ENCODE measurements at regions of chr22 and their contacts with region 1.

Region 1: DNA sequence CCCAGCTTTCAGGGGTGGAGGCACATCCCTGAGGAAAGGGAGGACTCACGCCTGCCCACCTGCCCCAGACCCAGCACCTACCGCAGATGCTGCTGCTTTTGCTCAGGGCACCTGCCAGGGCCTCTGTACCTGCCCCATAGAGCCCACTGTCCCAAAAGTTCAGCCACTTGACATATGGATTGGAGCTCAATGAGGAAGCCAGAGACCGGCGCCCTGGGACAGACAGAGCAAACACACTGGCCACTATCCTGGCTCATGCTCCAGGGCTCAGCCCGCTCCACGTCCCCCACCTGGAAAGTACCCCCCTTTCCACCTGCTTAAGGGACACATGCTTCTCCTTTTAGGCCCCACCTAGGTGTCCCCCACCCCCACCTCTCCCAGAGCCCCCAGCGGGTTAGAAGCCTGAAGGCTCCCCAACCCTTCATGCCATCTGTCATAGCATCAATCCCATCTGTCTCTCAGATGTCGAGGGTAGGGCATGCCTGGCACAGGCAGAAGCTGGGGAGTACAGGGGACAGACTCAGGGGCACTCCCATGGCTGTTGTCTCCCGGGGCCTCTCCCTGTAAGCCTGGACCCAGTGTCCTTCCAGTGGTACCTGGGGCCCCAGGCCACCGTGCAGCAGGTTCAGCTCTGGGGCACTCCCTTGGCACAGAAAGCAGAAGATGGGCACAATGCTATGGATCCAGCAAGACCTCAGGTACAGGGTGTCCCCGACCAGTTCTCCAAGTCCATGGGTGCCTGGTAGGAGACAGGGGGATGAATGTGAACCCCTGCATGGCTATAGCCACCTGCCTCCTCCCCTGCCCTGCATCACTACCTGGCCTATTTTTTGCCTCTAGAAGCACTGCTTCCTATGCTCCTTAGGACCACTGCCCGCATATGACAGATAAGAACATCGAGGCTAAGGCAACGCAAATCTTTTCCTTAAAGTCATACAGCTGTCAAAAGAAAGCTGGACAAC is 2.2 kb upstream of the P2RX6 start:
- DNase-seq: no peak
- ATAC-seq: no peak
- H3K4me3 ChIP-seq: no peak overlapping the region
- H3K4me3 Mint-ChIP-seq: peak overlapping the region; percentile 68 to 87 (median 69)
- H3K27ac ChIP-seq: peak overlapping the region; percentile 79
- H3K27ac Mint-ChIP-seq: peak overlapping the region; percentile 67 to 68
- H3K4me1 ChIP-seq: peaks cover 8 to 25% of the 10 kb centered on the region in 2 experiments
- H3K4me1 Mint-ChIP-seq: peaks cover 16 to 34% (median 26%) of the 10 kb centered on the region in 3 donors
- H3K27me3 ChIP-seq: peaks cover 0 to 4% of the 10 kb centered on the region in 2 experiments
- H3K27me3 Mint-ChIP-seq: no peaks in the 10 kb centered on the region

Region 2: DNA sequence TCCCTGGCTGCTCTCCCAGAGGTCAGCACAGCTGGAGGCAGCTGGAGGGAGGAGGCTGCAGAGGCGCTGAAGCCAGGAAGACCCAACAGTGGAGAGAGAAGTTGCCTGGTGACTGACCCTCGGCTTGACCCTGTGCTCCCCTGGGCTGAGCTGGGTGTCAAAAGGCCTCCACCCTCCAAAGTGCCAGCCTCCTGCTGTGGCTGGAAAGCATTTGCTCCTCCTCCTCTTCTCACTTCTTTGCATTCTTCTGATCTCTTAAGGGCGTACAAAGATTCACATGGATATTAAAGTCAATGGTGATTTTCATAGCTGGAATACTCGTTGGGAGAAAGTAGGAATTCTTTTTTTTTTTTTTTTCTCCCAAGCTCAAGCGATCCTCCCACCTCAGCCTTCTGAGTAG is 413.6 kb before region 1 on chr22:
- CTCF ChIA-PET with region 1: no interaction called
- POLR2A ChIA-PET with region 1: no interaction called
- DNase-seq: no peak
- ATAC-seq: no peak
- H3K4me3 ChIP-seq: no peak overlapping the region
- H3K4me3 Mint-ChIP-seq: no peak overlapping the region
- H3K27ac ChIP-seq: no peak overlapping the region
- H3K27ac Mint-ChIP-seq: no peak overlapping the region
- H3K4me1 ChIP-seq: peaks cover 0 to 4% of the 10 kb centered on the region in 2 experiments
- H3K4me1 Mint-ChIP-seq: peaks cover 0 to 4% (median 0%) of the 10 kb centered on the region in 3 donors
- H3K27me3 ChIP-seq: peaks cover 0 to 8% of the 10 kb centered on the region in 2 experiments
- H3K27me3 Mint-ChIP-seq: no peaks in the 10 kb centered on the region

Region 3: DNA sequence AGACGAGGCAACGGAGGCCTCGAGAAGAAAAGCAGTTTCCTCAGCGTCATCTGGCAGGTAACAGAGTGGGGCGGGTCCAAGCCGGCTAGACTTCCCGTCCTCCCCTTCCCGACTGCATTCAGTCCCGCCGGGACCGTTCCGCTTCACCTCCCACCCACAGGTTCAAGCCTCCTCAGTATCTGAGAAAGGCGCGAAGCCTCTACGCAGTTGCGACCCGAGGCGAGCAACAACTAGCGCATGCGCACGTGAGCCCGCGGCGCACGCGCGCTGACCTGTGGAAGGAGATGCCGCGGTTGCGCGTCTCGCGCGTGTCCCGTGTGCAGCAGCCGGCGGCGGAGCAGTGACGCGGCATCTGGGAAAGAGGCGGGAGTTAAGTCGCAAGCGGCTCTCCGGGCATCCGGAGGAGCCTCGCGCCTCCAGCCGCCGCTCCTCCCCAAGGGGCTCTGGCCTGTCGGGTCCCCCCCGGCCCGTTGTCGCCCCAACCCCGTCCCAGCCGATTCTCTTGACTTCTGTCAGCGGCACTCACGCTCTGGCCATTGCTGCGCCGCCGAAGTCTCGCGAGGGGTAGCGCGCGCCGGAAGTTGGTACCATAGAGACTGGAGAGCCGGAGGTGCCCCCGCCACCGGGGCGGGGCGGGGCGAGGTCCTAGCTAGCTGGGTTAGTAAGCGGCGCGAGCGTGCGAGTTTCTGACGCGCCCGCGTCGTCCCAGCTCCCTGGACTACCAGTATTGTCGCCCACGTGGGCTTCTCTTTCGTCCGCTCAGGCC is 11.0 kb before region 1 on chr22 and contains the start of gene THAP7:
- CTCF ChIA-PET with region 1: interaction called in 1 of 2 experiments, 3 read pairs
- POLR2A ChIA-PET with region 1: interaction called in 1 of 2 experiments, 14 read pairs
- DNase-seq: peak; percentile 94 to 99 (median 97)
- ATAC-seq: peak; percentile 91 to 93 (median 92)
- H3K4me3 ChIP-seq: peak within 1 kb of the TSS; percentile 82 to 94
- H3K4me3 Mint-ChIP-seq: peak within 1 kb of the TSS; percentile 94 to 96 (median 95)
- H3K27ac ChIP-seq: peak within 1 kb of the TSS; percentile 95
- H3K27ac Mint-ChIP-seq: peak within 1 kb of the TSS; percentile 98 to 100
- H3K4me1 ChIP-seq: peaks cover 12 to 46% of the 10 kb centered on the region in 2 experiments
- H3K4me1 Mint-ChIP-seq: peaks cover 39 to 43% (median 43%) of the 10 kb centered on the region in 3 donors
- H3K27me3 ChIP-seq: peaks cover 0 to 2% of the 10 kb centered on the region in 2 experiments
- H3K27me3 Mint-ChIP-seq: no peaks in the 10 kb centered on the region
- total RNA-seq, gene THAP7: 46.4 to 61.1 (median 56.8) TPM

Region 4: DNA sequence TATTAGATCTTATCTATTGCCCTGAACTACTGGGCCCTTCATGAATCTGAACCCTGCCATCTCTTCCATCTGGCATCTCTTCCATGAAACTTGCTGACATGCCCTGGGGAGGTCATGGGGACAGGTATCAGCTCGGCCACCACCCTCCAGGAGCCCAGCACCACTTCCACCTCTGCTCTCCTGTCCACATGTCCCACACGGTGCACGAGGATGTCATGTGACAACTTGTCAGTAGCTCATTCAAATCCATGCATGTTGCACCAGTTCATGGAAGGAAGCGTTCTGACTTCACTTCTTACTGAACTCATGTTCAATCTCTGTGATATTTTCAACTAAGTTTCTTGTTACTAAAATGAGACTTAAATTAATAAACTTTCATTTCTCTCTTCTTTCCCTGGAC is 706.3 kb after region 1 on chr22:
- CTCF ChIA-PET with region 1: no interaction called
- POLR2A ChIA-PET with region 1: interaction called in 1 of 2 experiments, 15 read pairs
- DNase-seq: no peak
- ATAC-seq: no peak
- H3K4me3 ChIP-seq: no peak overlapping the region
- H3K4me3 Mint-ChIP-seq: no peak overlapping the region
- H3K27ac ChIP-seq: no peak overlapping the region
- H3K27ac Mint-ChIP-seq: peak overlapping the region in 1 of 2 donors; percentile 40
- H3K4me1 ChIP-seq: no peaks in the 10 kb centered on the region
- H3K4me1 Mint-ChIP-seq: peaks cover 0 to 7% (median 0%) of the 10 kb centered on the region in 3 donors
- H3K27me3 ChIP-seq: no peaks in the 10 kb centered on the region
- H3K27me3 Mint-ChIP-seq: no peaks in the 10 kb centered on the region

Measured in T-cell (primary cell).